GM10248 (cell line): ENCODE measurements at regions of chr2 and their contacts with region 1.

Region 1: GRCh38 chr2:112941753-112942658 is 31.0 kb downstream of the IL37 start:
- DNase-seq: peak; percentile 76
- CTCF ChIP-seq: peak; percentile 98

Region 2: DNA sequence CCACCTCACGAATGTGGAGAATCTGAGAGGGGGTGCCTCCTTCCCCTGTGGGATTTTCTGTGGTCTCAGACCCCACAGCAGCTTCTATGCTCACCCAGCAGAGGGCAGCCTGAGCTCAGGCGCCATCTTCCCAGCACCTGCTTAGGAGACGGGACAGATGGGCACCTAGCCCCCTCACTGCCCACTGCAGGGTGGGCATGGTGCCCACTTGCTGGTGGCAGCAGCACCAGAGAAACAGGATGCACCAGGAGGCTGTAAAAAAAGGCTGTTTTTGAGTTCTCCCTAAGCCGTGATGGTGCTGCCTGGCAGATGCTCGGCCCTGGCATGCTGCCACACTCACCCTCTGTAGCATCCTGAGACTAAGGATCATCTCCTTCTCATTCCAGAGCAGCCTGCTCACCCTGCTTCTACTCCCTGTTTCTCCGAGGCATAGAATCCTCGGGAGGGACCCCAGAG is 315.4 kb before region 1 on chr2:
- CTCF ChIA-PET with region 1: interaction called, 24 read pairs
- POLR2A ChIA-PET with region 1: no interaction called
- DNase-seq: peak; percentile 70
- CTCF ChIP-seq: peak; percentile 93

Region 3: GRCh38 chr2:112740527-112740926 is 201.5 kb before region 1 on chr2:
- CTCF ChIA-PET with region 1: interaction called, 32 read pairs
- POLR2A ChIA-PET with region 1: no interaction called
- DNase-seq: no peak
- CTCF ChIP-seq: no peak

Region 4: DNA sequence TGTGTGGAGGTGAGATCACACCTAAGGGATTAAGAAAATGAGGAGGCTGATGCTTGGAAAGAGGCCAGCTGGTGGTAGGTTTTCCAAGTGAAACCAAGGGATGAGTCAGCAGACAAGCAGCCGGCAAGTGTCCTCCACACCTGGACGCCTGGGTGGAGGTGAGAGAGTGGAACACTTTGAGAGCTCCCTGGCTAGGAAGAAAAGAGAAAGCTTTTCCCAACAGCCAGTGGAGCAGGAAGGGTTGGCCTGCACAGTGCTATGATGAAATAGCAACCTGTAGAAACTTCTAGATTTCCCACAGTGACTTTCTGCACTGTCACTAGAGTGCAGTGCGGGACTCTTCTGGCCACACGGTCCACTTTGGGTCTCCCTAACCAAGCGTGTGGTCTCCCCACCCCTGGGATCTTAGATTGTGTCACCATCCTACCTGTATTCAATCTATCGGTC is 50.6 kb before region 1 on chr2:
- CTCF ChIA-PET with region 1: interaction called, 33 read pairs
- POLR2A ChIA-PET with region 1: no interaction called
- DNase-seq: no peak
- CTCF ChIP-seq: no peak

Region 5: GRCh38 chr2:112920923-112921532 is 21.0 kb before region 1 on chr2:
- CTCF ChIA-PET with region 1: interaction called, 69 read pairs
- POLR2A ChIA-PET with region 1: no interaction called
- DNase-seq: no peak
- CTCF ChIP-seq: no peak

Region 6: DNA sequence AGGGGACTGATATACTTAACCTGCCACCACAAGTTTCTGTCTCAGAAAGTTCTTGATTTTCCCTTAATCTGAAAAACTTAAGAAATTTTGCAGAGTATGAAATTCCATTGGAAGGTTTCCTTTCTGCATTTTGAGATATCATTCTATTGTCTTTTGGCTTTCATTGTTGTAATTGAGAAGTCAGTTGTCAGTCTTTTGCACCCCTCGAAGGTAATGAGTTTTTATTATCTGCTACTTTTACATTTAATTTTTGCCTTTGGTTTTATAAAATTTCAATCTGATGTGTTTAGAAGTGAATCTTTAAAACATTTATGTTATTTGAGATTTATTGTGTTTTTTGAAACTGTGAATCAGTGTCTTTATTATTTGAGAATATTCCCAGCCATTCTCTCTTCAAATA is 58.4 kb after region 1 on chr2:
- CTCF ChIA-PET with region 1: no interaction called
- POLR2A ChIA-PET with region 1: no interaction called
- DNase-seq: no peak
- CTCF ChIP-seq: no peak

Region 7: GRCh38 chr2:113060396-113060795 is 118.4 kb after region 1 on chr2:
- CTCF ChIA-PET with region 1: no interaction called
- POLR2A ChIA-PET with region 1: no interaction called
- DNase-seq: no peak
- CTCF ChIP-seq: no peak